ENCODE measurements at regions of chr15 and their contacts with region 1.

Region 1: DNA sequence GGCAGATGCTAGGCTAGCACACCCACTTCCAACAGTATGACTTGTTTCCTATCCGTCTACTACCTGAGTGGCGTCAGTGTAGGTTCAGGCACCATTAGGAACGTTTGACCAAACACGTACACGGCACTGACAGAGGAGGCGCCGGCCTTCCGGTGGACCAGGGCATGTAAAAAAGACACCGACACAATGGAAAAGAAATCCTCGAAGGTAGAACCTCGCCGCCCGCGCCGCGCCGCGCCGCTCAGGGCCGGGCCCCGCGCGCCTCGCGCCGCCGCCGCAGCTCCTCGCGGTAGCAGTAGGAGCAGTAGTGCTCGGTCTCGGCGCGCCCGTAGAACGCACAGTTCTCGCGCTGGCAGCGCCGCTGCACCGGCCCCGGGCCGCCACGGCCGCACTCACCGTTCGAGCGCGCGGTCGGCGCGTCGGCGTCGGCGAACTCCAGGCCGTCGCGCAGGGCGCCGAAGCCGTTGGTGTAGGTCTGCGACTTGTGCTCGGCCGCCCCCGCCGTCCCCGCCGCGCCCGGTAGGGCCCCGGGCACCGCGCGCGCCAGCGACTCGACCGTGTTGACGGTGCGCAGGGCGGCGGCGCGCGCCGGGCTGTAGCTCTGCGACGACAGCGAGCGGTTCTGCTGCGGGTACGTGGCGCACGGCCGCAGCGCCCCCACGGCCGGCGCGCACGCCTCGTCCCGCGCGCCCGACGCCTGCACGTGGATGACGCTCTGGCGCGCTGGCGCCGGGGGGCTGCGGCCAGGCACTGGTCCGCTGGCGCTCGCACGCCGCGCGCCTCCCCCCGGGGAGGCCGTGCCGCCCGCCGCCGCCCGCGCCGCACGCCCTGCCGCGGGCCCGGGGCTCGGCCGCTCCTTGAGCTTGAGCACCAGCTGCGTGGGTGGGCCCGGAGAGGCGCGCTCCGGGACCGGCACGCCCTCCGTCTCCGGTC is 156.7 kb downstream of the KLF13 start:
- DNase-seq: peak; percentile 48 to 64 (median 56)
- H3K4me3 ChIP-seq: peak overlapping the region in 1 of 2 donors; percentile 29
- H3K4me3 Mint-ChIP-seq: peak overlapping the region; percentile 91 to 96 (median 96)
- H3K27ac ChIP-seq: no peak overlapping the region
- H3K27ac Mint-ChIP-seq: peak overlapping the region; percentile 75 to 97 (median 92)
- H3K4me1 ChIP-seq: peaks cover 46% of the 10 kb centered on the region
- H3K4me1 Mint-ChIP-seq: peaks cover 21 to 69% (median 39%) of the 10 kb centered on the region in 4 donors
- H3K27me3 ChIP-seq: no peaks in the 10 kb centered on the region
- H3K27me3 Mint-ChIP-seq: no peaks in the 10 kb centered on the region

Region 2: GRCh38 chr15:31344823-31345605 is 138.3 kb before region 1 on chr15:
- CTCF ChIA-PET with region 1: interaction called, 9 read pairs
- POLR2A ChIA-PET with region 1: interaction called, 21 read pairs
- intact Hi-C with region 1: no loop called
- DNase-seq: peak in 1 of 5 donors; percentile 47
- H3K4me3 ChIP-seq: peak overlapping the region; percentile 54 to 60
- H3K4me3 Mint-ChIP-seq: peak overlapping the region; percentile 83 to 95 (median 90)
- H3K27ac ChIP-seq: peak overlapping the region; percentile 74
- H3K27ac Mint-ChIP-seq: peak overlapping the region; percentile 84 to 99 (median 98)
- H3K4me1 ChIP-seq: peaks cover 100% of the 10 kb centered on the region
- H3K4me1 Mint-ChIP-seq: peaks cover 70 to 100% (median 91%) of the 10 kb centered on the region in 4 donors
- H3K27me3 ChIP-seq: no peaks in the 10 kb centered on the region
- H3K27me3 Mint-ChIP-seq: no peaks in the 10 kb centered on the region

Region 3: GRCh38 chr15:31352911-31353811 is 130.2 kb before region 1 on chr15:
- CTCF ChIA-PET with region 1: interaction called, 21 read pairs
- POLR2A ChIA-PET with region 1: interaction called, 21 read pairs
- intact Hi-C with region 1: no loop called
- DNase-seq: peak in 4 of 5 donors; percentile 42 to 72 (median 52)
- H3K4me3 ChIP-seq: peak overlapping the region; percentile 15 to 31
- H3K4me3 Mint-ChIP-seq: peak overlapping the region; percentile 76 to 92 (median 85)
- H3K27ac ChIP-seq: peak overlapping the region; percentile 74
- H3K27ac Mint-ChIP-seq: peak overlapping the region; percentile 91 to 99 (median 95)
- H3K4me1 ChIP-seq: peaks cover 100% of the 10 kb centered on the region
- H3K4me1 Mint-ChIP-seq: peaks cover 71 to 100% (median 91%) of the 10 kb centered on the region in 4 donors
- H3K27me3 ChIP-seq: no peaks in the 10 kb centered on the region
- H3K27me3 Mint-ChIP-seq: no peaks in the 10 kb centered on the region

Region 4: GRCh38 chr15:31391687-31392671 is 91.3 kb before region 1 on chr15:
- CTCF ChIA-PET with region 1: interaction called, 11 read pairs
- POLR2A ChIA-PET with region 1: interaction called, 18 read pairs
- intact Hi-C with region 1: loop called (anchors 2 kb)
- DNase-seq: peak; percentile 78 to 87 (median 79)
- H3K4me3 ChIP-seq: peak overlapping the region; percentile 65 to 77
- H3K4me3 Mint-ChIP-seq: peak overlapping the region; percentile 87 to 96 (median 92)
- H3K27ac ChIP-seq: peak overlapping the region; percentile 57
- H3K27ac Mint-ChIP-seq: peak overlapping the region; percentile 81 to 98 (median 93)
- H3K4me1 ChIP-seq: peaks cover 28% of the 10 kb centered on the region
- H3K4me1 Mint-ChIP-seq: peaks cover 28 to 60% (median 39%) of the 10 kb centered on the region in 4 donors
- H3K27me3 ChIP-seq: no peaks in the 10 kb centered on the region
- H3K27me3 Mint-ChIP-seq: no peaks in the 10 kb centered on the region

Region 5: DNA sequence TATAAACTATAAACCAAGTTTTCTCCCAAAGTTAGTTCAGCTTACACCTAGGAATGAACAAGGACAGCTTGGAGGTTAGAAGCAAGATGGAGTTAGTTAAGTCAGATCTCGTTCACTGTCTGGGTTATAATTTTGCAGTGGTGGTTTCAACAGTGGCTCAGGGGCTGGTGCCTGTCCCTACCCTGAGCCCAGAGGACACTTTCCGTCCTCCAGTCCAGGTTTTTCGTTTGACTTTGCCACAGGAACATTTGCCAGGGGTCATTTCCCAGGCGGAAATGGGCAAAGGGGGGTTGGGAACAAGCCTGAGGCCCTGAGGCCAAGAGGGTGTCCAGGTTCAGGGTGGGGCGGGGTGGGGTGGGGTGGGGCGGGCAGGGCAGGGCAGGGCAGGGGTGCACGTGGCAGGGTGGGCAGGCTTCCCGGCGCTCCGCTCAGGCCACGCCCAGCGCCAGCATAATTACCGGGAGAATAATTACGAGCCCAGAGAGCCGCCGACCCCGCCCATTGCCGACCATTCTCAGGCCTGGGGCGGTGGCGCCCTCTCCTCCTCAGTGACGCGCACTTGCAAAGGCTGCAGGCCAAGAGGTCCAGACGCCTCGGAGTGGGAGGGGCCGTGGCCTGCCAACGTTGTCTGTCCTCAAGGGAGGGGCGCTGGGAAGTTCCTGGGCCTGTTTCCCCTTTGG is 86.3 kb before region 1 on chr15:
- CTCF ChIA-PET with region 1: interaction called, 11 read pairs
- POLR2A ChIA-PET with region 1: interaction called, 18 read pairs
- intact Hi-C with region 1: loop called (anchors 2 kb)
- DNase-seq: no peak
- H3K4me3 ChIP-seq: no peak overlapping the region
- H3K4me3 Mint-ChIP-seq: no peak overlapping the region
- H3K27ac ChIP-seq: no peak overlapping the region
- H3K27ac Mint-ChIP-seq: no peak overlapping the region
- H3K4me1 ChIP-seq: peaks cover 15% of the 10 kb centered on the region
- H3K4me1 Mint-ChIP-seq: peaks cover 10 to 41% (median 17%) of the 10 kb centered on the region in 4 donors
- H3K27me3 ChIP-seq: no peaks in the 10 kb centered on the region
- H3K27me3 Mint-ChIP-seq: no peaks in the 10 kb centered on the region

Region 6: GRCh38 chr15:31537770-31538592 is 54.7 kb after region 1 on chr15:
- CTCF ChIA-PET with region 1: no interaction called
- POLR2A ChIA-PET with region 1: no interaction called
- intact Hi-C with region 1: no loop called
- DNase-seq: no peak
- H3K4me3 ChIP-seq: no peak overlapping the region
- H3K4me3 Mint-ChIP-seq: no peak overlapping the region
- H3K27ac ChIP-seq: no peak overlapping the region
- H3K27ac Mint-ChIP-seq: no peak overlapping the region
- H3K4me1 ChIP-seq: no peaks in the 10 kb centered on the region
- H3K4me1 Mint-ChIP-seq: no peaks in the 10 kb centered on the region
- H3K27me3 ChIP-seq: peaks cover 8% of the 10 kb centered on the region
- H3K27me3 Mint-ChIP-seq: peaks cover 13 to 14% of the 10 kb centered on the region in 2 donors

Measured in CD4-positive, alpha-beta memory T cell (primary cell).